Activated CD8-positive, alpha-beta T cell treated with anti-CD3 and anti-CD28 coated beads, Interleukin-2, amount 10 ng/mL, durations not matched to agents 7 days and 5 days (primary cell): ENCODE measurements at regions of chr2 and their contacts with region 1.

Region 1: GRCh38 chr2:156400706-156401678 is 35.2 kb upstream of the GPD2 start:
- DNase-seq: peak; percentile 84
- ATAC-seq: peak; percentile 81
- H3K4me3 Mint-ChIP-seq: peak overlapping the region; percentile 78
- H3K27ac Mint-ChIP-seq: peak overlapping the region; percentile 85
- H3K4me1 Mint-ChIP-seq: peaks cover 33% of the 10 kb centered on the region
- H3K27me3 Mint-ChIP-seq: no peaks in the 10 kb centered on the region

Region 2: DNA sequence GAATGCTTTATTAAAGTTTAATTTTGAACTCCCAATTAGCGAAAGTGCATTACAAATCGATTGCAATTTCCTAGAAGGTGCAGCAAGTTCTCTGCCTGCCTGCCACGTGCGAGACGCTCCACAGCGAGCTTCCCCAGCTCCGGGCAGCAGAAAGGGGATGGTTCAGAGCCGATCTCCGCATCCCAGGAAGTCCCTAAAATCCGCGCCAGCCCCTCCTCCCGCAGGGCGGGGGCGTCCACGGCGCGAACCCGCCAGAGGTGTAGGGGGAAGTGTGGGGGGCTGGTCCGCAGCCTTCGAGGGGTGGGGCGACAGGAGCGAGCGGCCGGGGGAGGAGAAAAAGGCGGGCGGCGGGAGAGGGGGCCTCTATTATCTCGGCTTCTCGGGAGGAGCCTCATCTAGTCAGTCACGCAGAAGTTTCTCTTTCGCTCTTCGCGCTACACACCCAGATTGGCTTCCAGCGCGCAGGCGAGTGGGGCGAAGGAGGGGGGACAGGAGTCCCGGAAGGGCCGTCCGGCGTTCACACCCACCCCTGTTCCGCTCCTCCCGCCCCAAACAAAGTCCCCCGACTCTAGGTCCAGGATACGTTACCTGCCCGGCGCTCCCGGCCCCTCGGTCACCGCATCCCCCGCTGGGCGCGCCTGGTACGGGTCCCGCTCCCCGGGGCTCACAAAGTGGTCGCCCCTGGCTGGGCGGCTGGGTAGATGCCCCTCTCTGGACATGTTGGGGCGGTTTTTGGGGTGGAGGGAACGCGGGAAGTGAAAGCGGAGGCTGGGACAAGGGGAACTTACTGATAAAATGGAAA is 59.3 kb before region 1 on chr2:
- CTCF ChIA-PET with region 1: interaction called, 12 read pairs
- POLR2A ChIA-PET with region 1: interaction called, 46 read pairs
- DNase-seq: peak; percentile 93
- ATAC-seq: peak; percentile 81
- H3K4me3 Mint-ChIP-seq: peak overlapping the region; percentile 96
- H3K27ac Mint-ChIP-seq: peak overlapping the region; percentile 97
- H3K4me1 Mint-ChIP-seq: peaks cover 44% of the 10 kb centered on the region
- H3K27me3 Mint-ChIP-seq: no peaks in the 10 kb centered on the region